Cardiac septum (tissue), 1 donor: ENCODE measurements at regions of chr7 and their contacts with region 1.

Region 1: DNA sequence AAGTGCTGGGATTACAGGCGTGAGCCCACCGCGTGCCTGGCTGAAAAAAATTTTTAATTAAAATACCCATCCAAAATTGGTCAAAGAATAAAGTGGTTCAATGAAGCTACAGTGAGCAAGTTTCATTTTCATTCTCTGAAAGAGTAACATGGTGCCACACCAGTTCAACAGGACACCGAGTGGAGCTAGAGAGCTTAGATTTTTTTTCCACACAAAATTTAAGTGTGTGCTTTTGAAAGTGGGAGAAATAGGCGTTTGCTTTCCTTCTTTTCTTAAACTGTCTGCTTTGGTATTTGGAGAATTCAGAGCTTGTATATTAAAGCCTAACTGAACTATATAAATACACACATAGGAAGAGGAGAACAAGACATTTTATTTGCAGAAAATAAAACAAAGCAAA is 43.4 kb downstream of the BPGM start:
- DNase-seq: no peak

Region 2: GRCh38 chr7:134750083-134751062 is 60.4 kb after region 1 on chr7:
- intact Hi-C with region 1: loop called (anchors 5 kb)
- DNase-seq: no peak

Region 3: GRCh38 chr7:134943764-134944400 is 253.9 kb after region 1 on chr7:
- intact Hi-C with region 1: loop called (anchors 5 kb)
- DNase-seq: no peak

Region 4: GRCh38 chr7:135170274-135170997 is 480.4 kb after region 1 on chr7 and contains the start of gene CYREN:
- intact Hi-C with region 1: loop called (anchors 5 kb)
- DNase-seq: peak; percentile 97
- total RNA-seq, gene CYREN: 24.0 TPM